ENCODE measurements at regions of chr22 and their contacts with region 1.

Region 1: GRCh38 chr22:29291215-29291614 is 15.2 kb upstream of the GAS2L1 start:
- DNase-seq: no peak
- H3K4me3 Mint-ChIP-seq: no peak overlapping the region
- H3K27ac Mint-ChIP-seq: no peak overlapping the region
- H3K4me1 Mint-ChIP-seq: peaks cover 6% of the 10 kb centered on the region
- H3K27me3 Mint-ChIP-seq: no peaks in the 10 kb centered on the region

Region 2: GRCh38 chr22:29259253-29259899 is 31.8 kb before region 1 on chr22:
- intact Hi-C with region 1: no loop called
- DNase-seq: no peak
- H3K4me3 Mint-ChIP-seq: no peak overlapping the region
- H3K27ac Mint-ChIP-seq: no peak overlapping the region
- H3K4me1 Mint-ChIP-seq: no peaks in the 10 kb centered on the region
- H3K27me3 Mint-ChIP-seq: no peaks in the 10 kb centered on the region

Region 3: GRCh38 chr22:29275819-29276565 is 15.2 kb before region 1 on chr22:
- intact Hi-C with region 1: loop called (anchors 2 kb)
- DNase-seq: no peak
- H3K4me3 Mint-ChIP-seq: no peak overlapping the region
- H3K27ac Mint-ChIP-seq: no peak overlapping the region
- H3K4me1 Mint-ChIP-seq: peaks cover 51% of the 10 kb centered on the region
- H3K27me3 Mint-ChIP-seq: no peaks in the 10 kb centered on the region

Measured in activated T-helper 1 cell treated with anti-CD3 and anti-CD28 coated beads, Interleukin-12 subunit alpha, Interleukin-12 subunit beta, Interleukin-2, Interleukin-4 antibody, amounts not matched to agents 30 ng/mL and 10 ng/mL and 1 ng/mL, durations not matched to agents 14 hours and 24 hours and 36 hours (primary cell).